Endothelial cell of umbilical vein (primary cell): ENCODE measurements at regions of chr3 and their contacts with region 1.

Region 1: DNA sequence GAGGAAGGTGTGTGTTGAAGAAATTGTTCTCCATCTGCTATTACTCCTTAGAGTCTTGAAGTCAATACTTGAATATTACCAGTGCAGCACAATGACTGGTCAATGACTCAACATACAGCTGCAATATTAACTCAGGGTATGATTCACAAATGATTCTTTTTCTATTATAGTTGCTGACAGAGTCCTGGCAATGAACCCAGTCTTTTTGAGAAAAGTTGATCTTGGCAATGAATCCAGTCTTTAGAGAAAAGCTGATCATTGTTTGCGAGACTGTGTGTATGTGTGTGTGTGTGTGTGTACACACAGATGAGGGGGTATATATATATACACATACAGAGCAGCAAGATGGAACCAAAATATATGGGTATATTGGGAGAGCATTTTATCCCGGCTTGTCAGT is 315.1 kb downstream of the ZNF385D start:
- DNase-seq: peak; percentile 88
- H3K4me3 ChIP-seq: no peak overlapping the region
- H3K27ac ChIP-seq: no peak overlapping the region
- H3K4me1 ChIP-seq: peaks cover 8% of the 10 kb centered on the region
- H3K27me3 ChIP-seq: no peaks in the 10 kb centered on the region
- CTCF ChIP-seq: no peak
- POLR2A ChIP-seq: no peak

Region 2: DNA sequence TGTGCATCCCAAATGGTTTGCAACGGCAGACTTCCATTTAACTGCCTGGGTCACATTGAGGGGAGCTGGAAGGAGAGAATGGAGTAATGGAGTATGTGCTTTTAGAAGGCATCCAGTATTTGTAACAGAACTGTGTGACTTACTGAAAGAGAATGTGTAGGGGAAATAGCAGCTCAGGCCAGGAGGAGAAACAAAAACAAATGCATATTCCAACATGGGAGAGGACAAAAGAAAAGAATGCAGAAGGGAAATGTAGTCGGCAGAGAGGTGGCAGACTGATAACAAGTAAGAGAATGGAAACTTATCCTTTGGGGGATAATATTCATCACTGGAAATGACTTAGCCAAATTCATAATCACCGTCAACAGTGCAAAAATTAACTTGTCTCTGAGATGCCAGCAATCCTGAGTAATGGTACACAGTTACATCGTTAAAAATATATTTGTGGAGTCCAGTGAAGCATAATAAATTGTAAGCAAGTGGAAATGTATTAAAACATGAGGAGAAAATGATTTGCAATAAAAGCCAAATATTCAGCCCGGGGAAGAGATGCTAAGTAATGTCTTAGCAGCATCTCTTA is 955.0 kb before region 1 on chr3:
- CTCF ChIA-PET with region 1: no interaction called
- POLR2A ChIA-PET with region 1: no interaction called
- dilution Hi-C with region 1: no loop called
- intact Hi-C with region 1: loop called (anchors 1 kb)
- DNase-seq: peak; percentile 94
- H3K4me3 ChIP-seq: peak overlapping the region in 1 of 3 experiments; percentile 30
- H3K27ac ChIP-seq: peak overlapping the region; percentile 81
- H3K4me1 ChIP-seq: peaks cover 33% of the 10 kb centered on the region
- H3K27me3 ChIP-seq: no peaks in the 10 kb centered on the region
- CTCF ChIP-seq: no peak
- POLR2A ChIP-seq: peak; percentile 52

Region 3: DNA sequence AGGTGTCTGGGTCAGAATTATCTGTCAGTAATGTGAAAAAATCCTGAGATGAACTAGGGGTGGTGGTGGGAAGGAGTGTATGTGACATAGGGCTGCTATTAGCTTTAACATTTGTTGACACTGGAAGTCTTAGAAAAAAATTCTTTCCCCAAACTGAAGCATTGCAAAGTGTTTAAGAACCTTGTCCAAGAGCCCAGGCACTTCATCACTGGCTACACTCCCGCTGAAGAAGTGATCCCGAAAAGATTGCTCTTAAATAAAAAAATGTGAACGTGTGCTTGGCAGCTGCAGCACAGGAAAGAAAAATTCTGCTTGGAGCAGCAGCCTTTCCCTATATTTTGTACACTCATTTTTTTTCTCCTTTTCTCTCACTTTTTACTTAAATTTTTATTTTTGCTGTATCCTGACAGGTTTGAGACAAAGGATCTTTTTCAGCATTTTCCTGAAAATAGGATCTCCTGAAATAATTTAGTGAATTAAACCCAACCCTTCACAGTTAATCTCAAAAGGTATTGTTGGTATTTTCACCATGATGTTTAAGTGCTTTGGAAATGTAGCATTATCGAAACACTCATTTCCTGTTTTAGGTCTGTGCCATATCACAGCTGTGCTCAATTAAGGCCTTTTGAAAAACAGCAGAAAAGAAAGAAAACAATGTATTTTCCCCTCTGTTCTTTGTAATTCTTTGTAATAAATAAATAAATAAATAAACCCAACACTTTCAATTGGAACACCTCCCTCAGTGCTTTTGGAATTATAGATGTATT is 162.4 kb before region 1 on chr3:
- CTCF ChIA-PET with region 1: no interaction called
- POLR2A ChIA-PET with region 1: no interaction called
- dilution Hi-C with region 1: no loop called
- intact Hi-C with region 1: loop called (anchors 2 kb)
- DNase-seq: peak; percentile 23
- H3K4me3 ChIP-seq: no peak overlapping the region
- H3K27ac ChIP-seq: peak overlapping the region; percentile 50
- H3K4me1 ChIP-seq: peaks cover 14% of the 10 kb centered on the region
- H3K27me3 ChIP-seq: no peaks in the 10 kb centered on the region
- CTCF ChIP-seq: no peak
- POLR2A ChIP-seq: no peak

Region 4: DNA sequence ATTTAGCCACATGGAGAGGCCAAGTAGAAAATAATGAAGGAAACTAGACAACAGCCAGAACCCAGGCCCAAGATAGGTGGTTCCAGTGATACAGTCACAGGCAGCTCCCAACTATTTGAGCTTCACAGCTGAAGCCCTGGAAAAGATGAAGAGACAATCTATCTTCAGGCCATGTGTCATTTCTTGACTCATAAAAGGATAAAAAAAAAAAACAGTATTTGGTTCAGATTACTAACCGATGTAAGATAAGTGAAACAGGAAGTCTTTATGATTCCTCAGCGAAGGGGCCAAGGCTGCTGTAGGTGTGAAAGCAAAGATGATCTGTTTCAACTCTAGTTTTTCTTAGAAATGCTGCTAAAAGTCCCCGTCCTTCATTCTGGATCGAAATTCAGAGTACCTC is 79.5 kb before region 1 on chr3:
- CTCF ChIA-PET with region 1: no interaction called
- POLR2A ChIA-PET with region 1: no interaction called
- dilution Hi-C with region 1: no loop called
- intact Hi-C with region 1: no loop called
- DNase-seq: no peak
- H3K4me3 ChIP-seq: no peak overlapping the region
- H3K27ac ChIP-seq: no peak overlapping the region
- H3K4me1 ChIP-seq: no peaks in the 10 kb centered on the region
- H3K27me3 ChIP-seq: no peaks in the 10 kb centered on the region
- CTCF ChIP-seq: no peak
- POLR2A ChIP-seq: no peak

Region 5: GRCh38 chr3:21405671-21406667 is 29.9 kb before region 1 on chr3:
- CTCF ChIA-PET with region 1: no interaction called
- POLR2A ChIA-PET with region 1: no interaction called
- dilution Hi-C with region 1: no loop called
- intact Hi-C with region 1: loop called (anchors 1 kb)
- DNase-seq: no peak
- H3K4me3 ChIP-seq: no peak overlapping the region
- H3K27ac ChIP-seq: no peak overlapping the region
- H3K4me1 ChIP-seq: no peaks in the 10 kb centered on the region
- H3K27me3 ChIP-seq: no peaks in the 10 kb centered on the region
- CTCF ChIP-seq: no peak
- POLR2A ChIP-seq: no peak